ENCODE measurements at regions of chr5 and their contacts with region 1.

Region 1: GRCh38 chr5:9774472-9775079 is 144.4 kb upstream of the TAS2R1 start:
- DNase-seq: no peak
- H3K4me3 ChIP-seq: no peak overlapping the region
- H3K27me3 ChIP-seq: no peaks in the 10 kb centered on the region
- CTCF ChIP-seq: peak; percentile 50

Region 2: DNA sequence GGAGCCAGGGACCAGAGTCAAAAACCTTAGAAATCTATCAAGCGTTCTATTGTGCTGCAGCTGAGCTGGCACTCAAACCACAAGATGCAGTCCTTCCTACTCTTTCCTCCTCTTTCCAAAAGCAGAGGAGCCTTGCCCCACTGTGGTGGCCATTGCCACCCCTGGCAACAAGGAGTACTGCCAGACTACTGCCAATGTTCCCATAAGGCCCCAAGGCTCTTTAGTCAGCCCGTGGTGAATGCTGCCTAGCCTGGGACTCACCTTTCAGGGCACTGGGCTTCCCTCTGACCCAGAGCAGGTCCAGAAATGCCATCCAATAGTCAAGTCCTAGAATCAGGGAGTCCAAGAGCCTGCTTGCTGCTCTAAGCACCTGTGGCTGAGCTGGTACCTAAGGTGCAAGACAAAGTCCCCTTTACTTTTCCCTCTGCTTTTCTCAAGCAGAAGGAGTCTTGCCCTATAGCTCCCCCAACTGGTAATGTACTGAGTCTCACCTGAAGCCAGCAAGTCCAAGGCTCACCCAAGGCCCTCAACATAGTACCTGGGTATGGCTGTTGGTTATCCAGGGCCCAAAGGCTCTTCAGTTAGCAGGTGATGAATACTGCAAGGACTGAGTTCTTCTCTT is 255.7 kb after region 1 on chr5:
- CTCF ChIA-PET with region 1: interaction called, 12 read pairs
- POLR2A ChIA-PET with region 1: no interaction called
- DNase-seq: no peak
- H3K4me3 ChIP-seq: no peak overlapping the region
- H3K27me3 ChIP-seq: no peaks in the 10 kb centered on the region
- CTCF ChIP-seq: peak; percentile 62

Region 3: GRCh38 chr5:10671041-10672008 is 896.7 kb after region 1 on chr5:
- CTCF ChIA-PET with region 1: no interaction called
- POLR2A ChIA-PET with region 1: no interaction called
- DNase-seq: no peak
- H3K4me3 ChIP-seq: no peak overlapping the region
- H3K27me3 ChIP-seq: no peaks in the 10 kb centered on the region
- CTCF ChIP-seq: no peak

Measured in BJ (cell line).